ENCODE measurements at regions of chr3 and their contacts with region 1.

Region 1: GRCh38 chr3:172530566-172530965 is 7.3 kb upstream of the TNFSF10 start:
- DNase-seq: peak in 4 of 9 donors; percentile 31 to 43 (median 38)
- ATAC-seq: peak; percentile 83
- H3K4me3 ChIP-seq: peak overlapping the region; percentile 2
- H3K4me3 Mint-ChIP-seq: peak overlapping the region in 9 of 10 donors; percentile 14 to 84 (median 69)
- H3K27ac ChIP-seq: peak overlapping the region; percentile 9
- H3K27ac Mint-ChIP-seq: peak overlapping the region; percentile 40 to 93 (median 80)
- H3K4me1 ChIP-seq: peaks cover 14 to 18% of the 10 kb centered on the region in 2 donors
- H3K4me1 Mint-ChIP-seq: peaks cover 15 to 69% (median 30%) of the 10 kb centered on the region in 7 donors
- H3K27me3 ChIP-seq: no peaks in the 10 kb centered on the region
- H3K27me3 Mint-ChIP-seq: no peaks in the 10 kb centered on the region

Region 2: GRCh38 chr3:172511783-172512762 is 18.5 kb before region 1 on chr3:
- CTCF ChIA-PET with region 1: interaction called, 9 read pairs
- POLR2A ChIA-PET with region 1: interaction called, 33 read pairs
- intact Hi-C with region 1: loop called (anchors 2 kb)
- DNase-seq: peak in 7 of 9 donors; percentile 28 to 76 (median 48)
- ATAC-seq: peak; percentile 87
- H3K4me3 ChIP-seq: peak overlapping the region; percentile 2
- H3K4me3 Mint-ChIP-seq: peak overlapping the region; percentile 62 to 93 (median 80)
- H3K27ac ChIP-seq: peak overlapping the region; percentile 61
- H3K27ac Mint-ChIP-seq: peak overlapping the region; percentile 88 to 100 (median 93)
- H3K4me1 ChIP-seq: peaks cover 52 to 56% of the 10 kb centered on the region in 2 donors
- H3K4me1 Mint-ChIP-seq: peaks cover 65 to 91% (median 84%) of the 10 kb centered on the region in 7 donors
- H3K27me3 ChIP-seq: no peaks in the 10 kb centered on the region
- H3K27me3 Mint-ChIP-seq: no peaks in the 10 kb centered on the region

Region 3: GRCh38 chr3:172562871-172563863 is 32.6 kb after region 1 on chr3:
- CTCF ChIA-PET with region 1: no interaction called
- POLR2A ChIA-PET with region 1: no interaction called
- intact Hi-C with region 1: loop called in 1 of 2 experiments (anchors 2 kb)
- DNase-seq: peak in 3 of 9 donors; percentile 19 to 38 (median 22)
- ATAC-seq: peak; percentile 26
- H3K4me3 ChIP-seq: peak overlapping the region; percentile 26
- H3K4me3 Mint-ChIP-seq: peak overlapping the region in 9 of 10 donors; percentile 36 to 82 (median 66)
- H3K27ac ChIP-seq: no peak overlapping the region
- H3K27ac Mint-ChIP-seq: peak overlapping the region; percentile 22 to 92 (median 77)
- H3K4me1 ChIP-seq: peaks cover 0 to 15% of the 10 kb centered on the region in 2 donors
- H3K4me1 Mint-ChIP-seq: peaks cover 15 to 54% (median 26%) of the 10 kb centered on the region in 7 donors
- H3K27me3 ChIP-seq: no peaks in the 10 kb centered on the region
- H3K27me3 Mint-ChIP-seq: no peaks in the 10 kb centered on the region